ENCODE measurements at regions of chr4 and their contacts with region 1.

Region 1: GRCh38 chr4:75849461-75849860 is 52.8 kb downstream of the PPEF2 start:
- DNase-seq: peak; percentile 12
- H3K4me3 Mint-ChIP-seq: no peak overlapping the region
- H3K27ac Mint-ChIP-seq: no peak overlapping the region
- H3K4me1 Mint-ChIP-seq: peaks cover 14% of the 10 kb centered on the region
- H3K27me3 Mint-ChIP-seq: peaks cover 7% of the 10 kb centered on the region

Region 2: GRCh38 chr4:75542824-75543223 is 306.6 kb before region 1 on chr4:
- CTCF ChIA-PET with region 1: no interaction called
- POLR2A ChIA-PET with region 1: no interaction called
- intact Hi-C with region 1: no loop called
- DNase-seq: no peak
- H3K4me3 Mint-ChIP-seq: no peak overlapping the region
- H3K27ac Mint-ChIP-seq: no peak overlapping the region
- H3K4me1 Mint-ChIP-seq: no peaks in the 10 kb centered on the region
- H3K27me3 Mint-ChIP-seq: no peaks in the 10 kb centered on the region

Region 3: DNA sequence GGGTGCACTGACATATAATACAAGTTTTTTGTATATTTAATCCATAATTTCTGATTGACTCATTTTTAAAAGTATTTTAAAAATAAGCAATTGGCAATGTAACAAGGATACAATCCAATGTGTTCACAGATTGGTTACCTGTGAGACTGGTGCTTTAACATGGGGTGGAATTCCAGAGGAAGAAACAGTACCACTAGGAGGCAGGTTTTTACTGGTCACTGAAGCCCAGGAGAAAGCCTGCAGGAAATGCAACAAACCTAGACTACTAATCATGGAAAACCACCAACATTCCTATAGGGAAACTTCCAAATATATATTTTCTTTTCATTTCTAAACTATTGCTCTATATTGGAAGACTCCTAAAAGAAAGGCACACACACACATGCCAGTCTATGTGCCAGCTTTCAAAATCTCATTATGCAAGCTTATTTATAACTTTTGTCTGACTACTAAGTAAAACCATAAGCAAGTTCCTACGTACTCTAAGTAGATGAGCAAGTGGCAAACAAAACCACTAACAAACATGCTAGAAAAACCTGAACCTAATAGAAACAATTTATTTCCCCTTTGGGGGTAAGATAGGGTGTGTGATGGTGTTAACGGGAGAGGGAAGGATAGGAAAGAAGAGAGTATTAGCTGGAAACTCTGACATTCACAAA is 195.5 kb before region 1 on chr4:
- CTCF ChIA-PET with region 1: interaction called, 10 read pairs
- POLR2A ChIA-PET with region 1: no interaction called
- intact Hi-C with region 1: loop called (anchors 5 kb)
- DNase-seq: no peak
- H3K4me3 Mint-ChIP-seq: no peak overlapping the region
- H3K27ac Mint-ChIP-seq: peak overlapping the region; percentile 82
- H3K4me1 Mint-ChIP-seq: peaks cover 43% of the 10 kb centered on the region
- H3K27me3 Mint-ChIP-seq: no peaks in the 10 kb centered on the region

Region 4: GRCh38 chr4:75779105-75779757 is 70.2 kb before region 1 on chr4:
- CTCF ChIA-PET with region 1: interaction called, 3 read pairs
- POLR2A ChIA-PET with region 1: no interaction called
- intact Hi-C with region 1: loop called (anchors 2 kb)
- DNase-seq: peak; percentile 14
- H3K4me3 Mint-ChIP-seq: no peak overlapping the region
- H3K27ac Mint-ChIP-seq: peak overlapping the region; percentile 58
- H3K4me1 Mint-ChIP-seq: peaks cover 15% of the 10 kb centered on the region
- H3K27me3 Mint-ChIP-seq: no peaks in the 10 kb centered on the region

Region 5: GRCh38 chr4:75821966-75822365 is 27.5 kb before region 1 on chr4:
- CTCF ChIA-PET with region 1: interaction called, 5 read pairs
- POLR2A ChIA-PET with region 1: no interaction called
- intact Hi-C with region 1: loop called (anchors 1 kb)
- DNase-seq: no peak
- H3K4me3 Mint-ChIP-seq: no peak overlapping the region
- H3K27ac Mint-ChIP-seq: no peak overlapping the region
- H3K4me1 Mint-ChIP-seq: peaks cover 2% of the 10 kb centered on the region
- H3K27me3 Mint-ChIP-seq: no peaks in the 10 kb centered on the region